Right ventricle myocardium superior (tissue), 1 donor: ENCODE measurements at regions of chrX and their contacts with region 1.

Region 1: DNA sequence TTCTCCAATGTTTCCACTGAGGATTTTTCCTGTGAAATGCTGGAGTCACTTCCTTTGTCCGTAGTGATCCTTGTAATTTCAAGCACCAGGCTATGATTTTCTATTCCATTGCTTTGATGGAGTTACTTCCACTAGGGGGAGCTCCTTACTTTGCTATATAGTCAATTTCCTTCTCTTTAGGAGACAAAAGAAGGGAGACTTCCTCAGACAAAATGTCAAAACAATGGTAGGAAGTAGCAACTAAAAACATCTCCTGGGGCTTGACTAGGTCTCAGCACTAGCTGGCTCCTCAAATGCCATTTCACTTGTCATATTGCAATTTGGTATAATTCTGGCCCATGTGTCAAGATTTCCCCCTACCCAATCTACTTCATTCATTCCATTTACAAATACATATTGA is 24.1 kb downstream of the ZCCHC12 start:
- DNase-seq: no peak
- ATAC-seq: peak; percentile 58

Region 2: GRCh38 chrX:119004920-119005524 is 157.3 kb after region 1 on chrX:
- intact Hi-C with region 1: loop called (anchors 5 kb)
- DNase-seq: peak; percentile 72
- ATAC-seq: peak; percentile 77

Region 3: DNA sequence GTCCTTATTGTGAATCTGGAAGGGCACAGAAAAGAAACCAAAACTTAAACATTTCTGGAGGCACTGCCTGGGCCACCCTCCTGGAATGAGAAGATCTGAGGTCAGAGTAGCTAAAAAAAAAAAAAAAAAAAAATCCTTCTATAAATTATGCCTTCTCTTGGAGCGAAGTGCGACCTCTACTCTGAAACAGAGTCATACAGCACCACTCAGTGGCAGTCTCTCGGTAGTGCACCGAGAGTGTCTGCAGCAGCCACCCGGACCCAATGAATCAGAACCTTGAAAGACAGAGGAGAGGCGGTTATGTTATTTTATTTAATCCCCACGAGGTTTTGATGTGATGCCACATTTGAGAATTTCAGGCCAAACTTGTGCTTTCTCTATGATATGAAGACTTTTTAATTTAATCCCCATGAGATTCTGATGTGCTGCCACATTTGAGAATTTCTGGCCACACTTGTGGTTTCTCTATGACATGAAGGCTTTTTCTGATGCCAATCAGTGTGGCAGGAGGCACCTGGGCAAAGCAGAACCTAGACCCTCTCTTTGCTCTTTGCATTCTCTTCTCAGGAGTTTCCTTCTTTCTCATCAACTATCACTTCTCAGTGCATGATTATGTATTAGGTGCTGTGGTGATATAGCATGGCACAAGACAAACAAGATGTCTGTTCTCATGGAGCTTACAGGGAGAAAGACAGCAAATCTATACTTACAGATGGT is 219.5 kb after region 1 on chrX:
- intact Hi-C with region 1: loop called (anchors 5 kb)
- DNase-seq: peak; percentile 69
- ATAC-seq: peak; percentile 84